BJ (cell line): ENCODE measurements at regions of chr9 and their contacts with region 1.

Region 1: GRCh38 chr9:120531683-120532300 is 48.2 kb downstream of the CDK5RAP2 start:
- DNase-seq: no peak
- H3K4me3 ChIP-seq: no peak overlapping the region
- H3K27me3 ChIP-seq: no peaks in the 10 kb centered on the region
- CTCF ChIP-seq: peak; percentile 56

Region 2: GRCh38 chr9:120438836-120439546 is 92.8 kb before region 1 on chr9:
- CTCF ChIA-PET with region 1: no interaction called
- POLR2A ChIA-PET with region 1: no interaction called
- DNase-seq: no peak
- H3K4me3 ChIP-seq: no peak overlapping the region
- H3K27me3 ChIP-seq: no peaks in the 10 kb centered on the region
- CTCF ChIP-seq: peak; percentile 64

Region 3: GRCh38 chr9:120454467-120454866 is 77.3 kb before region 1 on chr9:
- CTCF ChIA-PET with region 1: no interaction called
- POLR2A ChIA-PET with region 1: no interaction called
- DNase-seq: no peak
- H3K4me3 ChIP-seq: no peak overlapping the region
- H3K27me3 ChIP-seq: no peaks in the 10 kb centered on the region
- CTCF ChIP-seq: no peak

Region 4: GRCh38 chr9:120542701-120543490 is 11.1 kb after region 1 on chr9:
- CTCF ChIA-PET with region 1: interaction called, 14 read pairs
- POLR2A ChIA-PET with region 1: interaction called, 3 read pairs
- DNase-seq: no peak
- H3K4me3 ChIP-seq: no peak overlapping the region
- H3K27me3 ChIP-seq: no peaks in the 10 kb centered on the region
- CTCF ChIP-seq: no peak